ENCODE measurements at regions of chr14 and their contacts with region 1.

Region 1: DNA sequence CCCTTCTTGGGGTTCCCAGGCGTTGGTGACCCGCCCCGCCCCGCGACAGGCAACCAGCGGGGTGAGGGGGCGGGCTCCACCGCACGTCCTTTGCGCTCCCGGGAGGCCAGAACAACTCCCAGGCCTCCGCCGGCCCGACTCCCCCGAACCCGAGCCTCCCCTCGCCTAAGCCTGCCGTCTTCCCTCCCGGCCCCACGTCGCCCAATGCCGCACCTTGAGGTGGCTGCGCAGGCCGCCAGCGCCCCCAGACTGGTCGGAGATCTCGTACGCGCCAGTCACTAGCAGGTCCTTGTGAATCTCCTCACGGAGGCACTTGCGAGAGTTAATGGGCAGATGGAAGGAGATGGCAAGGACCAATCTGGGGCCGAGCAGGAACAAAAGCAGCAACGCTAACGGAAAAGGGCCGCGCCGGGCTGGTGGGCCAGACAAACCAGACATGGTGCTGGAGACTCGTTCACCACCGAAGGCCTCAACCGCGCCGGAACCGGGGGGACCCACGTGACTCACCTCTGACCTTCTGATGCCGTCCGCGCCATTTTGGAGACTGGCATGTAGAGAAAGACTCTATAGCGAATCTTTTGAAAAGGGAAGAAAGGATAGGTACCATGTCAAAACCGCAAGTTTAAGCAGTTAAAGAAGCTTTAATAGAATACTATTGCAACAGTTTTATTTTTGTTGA is at the start of gene TMED10:
- DNase-seq: peak; percentile 88
- H3K4me3 Mint-ChIP-seq: peak within 1 kb of the TSS; percentile 87
- H3K27ac Mint-ChIP-seq: peak within 1 kb of the TSS; percentile 92
- H3K4me1 Mint-ChIP-seq: peaks cover 25% of the 10 kb centered on the region
- H3K27me3 Mint-ChIP-seq: peaks cover 3% of the 10 kb centered on the region
- total RNA-seq, gene TMED10: 231 and 248 TPM in 2 replicates

Region 2: DNA sequence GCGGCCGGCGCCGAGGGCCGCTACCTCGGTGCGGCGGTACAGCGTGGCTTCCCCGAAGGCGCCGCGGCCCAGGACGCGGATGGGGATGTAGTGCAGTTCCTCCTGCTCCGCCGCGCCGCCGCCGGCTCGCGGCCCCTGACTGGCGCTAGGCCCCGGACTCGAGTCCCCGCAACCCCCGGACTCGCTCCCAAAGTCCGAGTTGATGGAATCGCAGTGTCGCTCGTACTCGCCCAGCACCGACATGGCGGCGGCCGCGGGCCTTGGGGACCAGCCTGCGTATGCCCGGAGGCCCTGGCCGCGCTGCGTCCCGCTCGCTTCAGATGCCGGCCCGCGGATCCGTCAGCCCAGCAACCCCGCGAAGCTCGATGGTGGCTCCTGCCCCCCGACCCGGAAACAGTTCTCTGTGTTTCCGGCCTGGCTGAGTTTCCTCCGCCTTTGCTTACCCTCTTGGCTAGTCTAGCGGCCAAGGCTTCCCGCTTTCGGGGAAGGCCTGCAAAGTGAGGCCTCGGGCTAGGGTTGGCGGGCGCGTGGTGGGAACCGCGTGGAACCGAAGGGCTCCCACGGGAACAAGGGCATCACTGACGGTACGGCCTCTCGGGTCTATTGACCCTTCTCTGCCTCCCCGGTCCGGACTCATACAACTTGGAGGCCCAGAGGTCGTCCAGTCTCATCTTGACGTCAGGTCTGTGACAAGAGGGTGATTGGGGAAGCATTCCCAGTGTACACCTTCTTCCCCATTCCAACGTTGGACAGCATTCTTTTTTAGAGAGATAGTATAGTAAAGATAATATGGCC is 49.4 kb before region 1 on chr14 and contains the start of gene NEK9:
- intact Hi-C with region 1: loop called (anchors 5 kb)
- DNase-seq: peak; percentile 85
- H3K4me3 Mint-ChIP-seq: peak within 1 kb of the TSS; percentile 98
- H3K27ac Mint-ChIP-seq: peak within 1 kb of the TSS; percentile 96
- H3K4me1 Mint-ChIP-seq: peaks cover 39% of the 10 kb centered on the region
- H3K27me3 Mint-ChIP-seq: no peaks in the 10 kb centered on the region
- total RNA-seq, gene NEK9: 58.1 and 69.8 TPM in 2 replicates

Region 3: GRCh38 chr14:75158843-75159614 is 17.3 kb before region 1 on chr14:
- intact Hi-C with region 1: loop called (anchors 1 kb)
- DNase-seq: no peak
- H3K4me3 Mint-ChIP-seq: no peak overlapping the region
- H3K27ac Mint-ChIP-seq: peak overlapping the region; percentile 42
- H3K4me1 Mint-ChIP-seq: peaks cover 57% of the 10 kb centered on the region
- H3K27me3 Mint-ChIP-seq: no peaks in the 10 kb centered on the region

Region 4: DNA sequence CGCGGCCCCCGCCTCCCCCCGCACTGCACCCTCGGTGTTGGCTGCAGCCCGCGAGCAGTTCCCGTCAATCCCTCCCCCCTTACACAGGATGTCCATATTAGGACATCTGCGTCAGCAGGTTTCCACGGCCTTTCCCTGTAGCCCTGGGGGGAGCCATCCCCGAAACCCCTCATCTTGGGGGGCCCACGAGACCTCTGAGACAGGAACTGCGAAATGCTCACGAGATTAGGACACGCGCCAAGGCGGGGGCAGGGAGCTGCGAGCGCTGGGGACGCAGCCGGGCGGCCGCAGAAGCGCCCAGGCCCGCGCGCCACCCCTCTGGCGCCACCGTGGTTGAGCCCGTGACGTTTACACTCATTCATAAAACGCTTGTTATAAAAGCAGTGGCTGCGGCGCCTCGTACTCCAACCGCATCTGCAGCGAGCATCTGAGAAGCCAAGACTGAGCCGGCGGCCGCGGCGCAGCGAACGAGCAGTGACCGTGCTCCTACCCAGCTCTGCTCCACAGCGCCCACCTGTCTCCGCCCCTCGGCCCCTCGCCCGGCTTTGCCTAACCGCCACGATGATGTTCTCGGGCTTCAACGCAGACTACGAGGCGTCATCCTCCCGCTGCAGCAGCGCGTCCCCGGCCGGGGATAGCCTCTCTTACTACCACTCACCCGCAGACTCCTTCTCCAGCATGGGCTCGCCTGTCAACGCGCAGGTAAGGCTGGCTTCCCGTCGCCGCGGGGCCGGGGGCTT is 102.3 kb after region 1 on chr14 and contains the start of gene FOS:
- intact Hi-C with region 1: loop called (anchors 1 kb)
- DNase-seq: peak; percentile 87
- H3K4me3 Mint-ChIP-seq: peak within 1 kb of the TSS; percentile 95
- H3K27ac Mint-ChIP-seq: peak within 1 kb of the TSS; percentile 97
- H3K4me1 Mint-ChIP-seq: peaks cover 35% of the 10 kb centered on the region
- H3K27me3 Mint-ChIP-seq: peaks cover 55% of the 10 kb centered on the region
- total RNA-seq, gene FOS: 24.7 and 27.8 TPM in 2 replicates

Region 5: DNA sequence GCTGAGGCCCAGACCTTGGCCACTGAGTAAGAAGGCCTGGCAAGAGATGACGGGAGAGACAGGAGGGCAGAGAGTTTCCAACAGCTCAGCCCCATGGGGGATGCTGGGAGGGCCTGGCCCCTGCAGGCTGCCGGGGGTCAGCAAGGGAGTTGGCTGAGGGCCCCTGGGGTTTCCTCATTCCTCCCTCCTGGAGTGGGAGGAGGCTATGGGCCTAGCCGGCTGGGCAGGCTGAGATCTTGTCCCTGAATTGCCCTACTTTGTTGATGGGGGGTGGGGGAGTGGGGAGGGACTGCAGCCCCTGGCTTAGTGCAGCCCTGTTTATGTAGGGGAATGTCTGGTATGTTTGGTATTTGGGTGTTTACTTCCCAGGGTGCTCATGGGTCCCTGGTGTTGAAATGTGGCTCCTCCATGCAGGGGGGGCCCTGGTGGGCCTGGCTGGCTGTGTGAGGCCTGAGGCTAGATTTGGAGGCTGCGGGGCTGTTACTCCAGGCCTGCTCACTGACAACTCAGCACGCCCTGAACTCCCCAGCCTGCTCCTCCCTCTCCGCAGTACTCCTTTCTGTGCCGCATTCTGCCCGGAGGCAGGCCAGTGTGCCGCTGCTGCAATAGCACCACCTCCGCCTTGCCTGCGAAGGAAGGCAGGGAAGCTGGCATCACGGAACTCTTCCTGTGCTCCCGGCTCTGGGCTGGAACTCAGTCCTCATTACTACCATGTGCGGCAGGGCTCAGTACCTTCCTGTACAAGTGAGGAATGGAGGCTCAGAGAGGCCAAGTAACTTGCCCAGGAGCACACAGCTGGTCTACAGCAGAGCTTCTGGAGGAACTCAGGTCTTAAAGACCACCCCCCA is 276.8 kb after region 1 on chr14:
- intact Hi-C with region 1: no loop called
- DNase-seq: no peak
- H3K4me3 Mint-ChIP-seq: no peak overlapping the region
- H3K27ac Mint-ChIP-seq: no peak overlapping the region
- H3K4me1 Mint-ChIP-seq: peaks cover 4% of the 10 kb centered on the region
- H3K27me3 Mint-ChIP-seq: no peaks in the 10 kb centered on the region

Measured in activated T-helper 2 cell treated with anti-CD3 and anti-CD28 coated beads, Interferon-gamma antibody, Interleukin-2, Interleukin-4, amounts not matched to agents 10 μg/mL and 5 μg/mL and 100 μg/mL, durations not matched to agents 14 hours and 24 hours and 36 hours (primary cell).